Ascending aorta (tissue), 2 donors: ENCODE measurements at regions of chrX and their contacts with region 1.

Region 1: DNA sequence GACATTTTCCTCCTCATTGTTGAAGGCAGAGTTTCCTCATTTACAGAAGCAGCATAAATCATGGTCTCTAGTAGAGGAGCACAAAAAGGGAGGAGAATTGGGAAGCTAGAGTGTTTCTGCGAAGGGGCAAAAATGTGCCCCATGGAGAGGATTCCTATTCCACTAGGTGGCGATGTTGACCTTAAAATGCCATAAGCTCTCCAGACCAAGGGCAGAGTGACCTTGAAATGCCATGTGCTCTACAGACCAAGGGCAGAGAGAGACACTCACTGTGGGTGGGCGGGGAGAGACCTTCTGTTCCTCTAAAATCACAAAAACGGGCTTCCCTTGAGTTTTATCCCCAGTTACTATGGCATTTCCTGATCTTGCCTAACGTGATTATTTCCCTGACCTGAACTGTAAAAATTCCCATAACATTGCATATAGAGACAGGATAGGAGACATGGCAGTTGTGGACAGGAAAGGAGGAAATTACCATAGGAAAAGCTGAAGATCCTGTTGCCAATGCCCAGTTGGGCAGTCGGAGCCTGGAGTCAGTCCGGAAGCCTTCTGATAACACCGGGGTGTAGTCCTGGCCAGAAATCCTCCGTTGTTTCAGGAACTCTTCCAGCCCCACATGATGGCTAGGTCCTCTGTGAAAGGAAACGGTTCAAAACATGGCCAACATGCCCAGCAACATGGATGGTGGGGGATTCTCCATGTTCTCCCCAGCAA is 567.7 kb downstream of the MAGEB5 start:
- DNase-seq: no peak
- H3K4me3 ChIP-seq: no peak overlapping the region
- H3K27ac ChIP-seq: no peak overlapping the region
- H3K4me1 ChIP-seq: no peaks in the 10 kb centered on the region
- H3K27me3 ChIP-seq: no peaks in the 10 kb centered on the region
- CTCF ChIP-seq: peak in 2 of 3 experiments; percentile 21 to 39

Region 2: GRCh38 chrX:27186664-27187063 is 403.0 kb after region 1 on chrX:
- intact Hi-C with region 1: loop called (anchors 10 kb)
- DNase-seq: no peak
- H3K4me3 ChIP-seq: no peak overlapping the region
- H3K27ac ChIP-seq: no peak overlapping the region
- H3K4me1 ChIP-seq: no peaks in the 10 kb centered on the region
- H3K27me3 ChIP-seq: no peaks in the 10 kb centered on the region
- CTCF ChIP-seq: peak; percentile 19 to 65 (median 57)